ENCODE measurements at regions of chr10 and their contacts with region 1.

Region 1: GRCh38 chr10:4849555-4850242 is 23.7 kb downstream of the AKR1E2 start:
- DNase-seq: peak; percentile 92 to 95 (median 94)
- H3K4me3 ChIP-seq: peak overlapping the region in 1 of 3 donors; percentile 28
- H3K27ac ChIP-seq: no peak overlapping the region
- H3K4me1 ChIP-seq: peaks cover 0 to 4% (median 0%) of the 10 kb centered on the region in 3 donors
- H3K27me3 ChIP-seq: no peaks in the 10 kb centered on the region
- CTCF ChIP-seq: peak; percentile 100

Region 2: GRCh38 chr10:5105626-5106025 is 255.9 kb after region 1 on chr10:
- intact Hi-C with region 1: loop called (anchors 10 kb)
- DNase-seq: no peak
- H3K4me3 ChIP-seq: no peak overlapping the region
- H3K27ac ChIP-seq: no peak overlapping the region
- H3K4me1 ChIP-seq: no peaks in the 10 kb centered on the region
- H3K27me3 ChIP-seq: no peaks in the 10 kb centered on the region
- CTCF ChIP-seq: no peak

Measured in kidney (tissue), 22 donors.